Endothelial cell of umbilical vein (primary cell): ENCODE measurements at regions of chr17 and their contacts with region 1.

Region 1: GRCh38 chr17:37527249-37527851 is 37.7 kb downstream of the DUSP14 start:
- DNase-seq: peak; percentile 56
- H3K4me3 ChIP-seq: no peak overlapping the region
- H3K27ac ChIP-seq: no peak overlapping the region
- H3K4me1 ChIP-seq: no peaks in the 10 kb centered on the region
- H3K27me3 ChIP-seq: no peaks in the 10 kb centered on the region
- CTCF ChIP-seq: peak; percentile 57 to 66
- POLR2A ChIP-seq: no peak

Region 2: GRCh38 chr17:37538991-37539659 is 11.8 kb after region 1 on chr17:
- CTCF ChIA-PET with region 1: interaction called, 16 read pairs
- POLR2A ChIA-PET with region 1: no interaction called
- dilution Hi-C with region 1: no loop called
- intact Hi-C with region 1: no loop called
- DNase-seq: no peak
- H3K4me3 ChIP-seq: no peak overlapping the region
- H3K27ac ChIP-seq: no peak overlapping the region
- H3K4me1 ChIP-seq: no peaks in the 10 kb centered on the region
- H3K27me3 ChIP-seq: no peaks in the 10 kb centered on the region
- CTCF ChIP-seq: no peak
- POLR2A ChIP-seq: no peak

Region 3: GRCh38 chr17:37570527-37571093 is 43.3 kb after region 1 on chr17:
- CTCF ChIA-PET with region 1: interaction called, 22 read pairs
- POLR2A ChIA-PET with region 1: no interaction called
- dilution Hi-C with region 1: no loop called
- intact Hi-C with region 1: loop called (anchors 1 kb)
- DNase-seq: peak; percentile 66
- H3K4me3 ChIP-seq: no peak overlapping the region
- H3K27ac ChIP-seq: no peak overlapping the region
- H3K4me1 ChIP-seq: no peaks in the 10 kb centered on the region
- H3K27me3 ChIP-seq: no peaks in the 10 kb centered on the region
- CTCF ChIP-seq: peak; percentile 54 to 71
- POLR2A ChIP-seq: no peak

Region 4: DNA sequence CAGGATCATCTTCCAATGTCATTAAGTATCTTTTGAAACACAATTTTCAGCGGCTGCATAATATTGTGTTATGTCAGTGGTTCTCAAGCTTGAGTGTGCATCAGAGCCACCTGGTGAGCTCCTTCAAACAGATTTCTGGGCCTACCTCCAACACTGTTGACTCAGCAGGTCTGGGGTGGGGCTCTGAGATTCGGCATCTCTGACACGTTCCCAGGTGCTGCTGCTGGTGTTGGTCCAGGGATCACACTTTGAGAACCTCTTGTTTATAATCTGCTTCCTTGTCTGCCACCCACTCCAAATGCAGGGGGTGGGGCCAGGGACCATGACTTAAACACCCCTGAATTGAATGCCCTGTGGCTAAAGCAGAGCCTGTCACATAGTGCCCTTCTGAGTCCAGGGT is 291.3 kb after region 1 on chr17:
- CTCF ChIA-PET with region 1: interaction called, 30 read pairs
- POLR2A ChIA-PET with region 1: no interaction called
- dilution Hi-C with region 1: no loop called
- intact Hi-C with region 1: loop called (anchors 1 kb)
- DNase-seq: no peak
- H3K4me3 ChIP-seq: no peak overlapping the region
- H3K27ac ChIP-seq: no peak overlapping the region
- H3K4me1 ChIP-seq: peaks cover 3% of the 10 kb centered on the region
- H3K27me3 ChIP-seq: peaks cover 9% of the 10 kb centered on the region in 2 experiments
- CTCF ChIP-seq: no peak
- POLR2A ChIP-seq: no peak